Activated B cell treated with CpG ODN at 0.5 μM for 24 hours (primary cell): ENCODE measurements at regions of chr5 and their contacts with region 1.

Region 1: DNA sequence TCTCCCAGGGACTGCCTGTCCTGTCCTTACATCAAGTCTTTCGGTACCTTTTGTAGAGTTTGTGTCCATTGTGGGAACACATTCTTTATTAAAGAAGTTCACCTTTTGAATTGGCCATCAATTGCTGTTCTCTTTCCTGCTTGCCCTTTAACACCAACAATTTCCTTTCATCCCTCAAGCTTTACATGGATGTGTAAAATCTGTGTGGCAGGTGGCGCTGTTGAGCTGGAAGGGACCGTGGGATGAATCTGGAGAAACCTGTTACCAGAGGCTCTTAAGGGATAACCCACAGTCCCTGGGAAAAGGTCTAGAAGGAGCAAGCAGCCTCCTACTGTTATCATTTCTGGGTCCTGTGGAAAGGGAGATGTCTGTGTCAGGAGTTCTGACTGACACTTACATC is 7.9 kb upstream of the ZFP62 start:
- DNase-seq: peak; percentile 45
- ATAC-seq: peak; percentile 54
- H3K4me3 Mint-ChIP-seq: no peak overlapping the region
- H3K27ac Mint-ChIP-seq: no peak overlapping the region
- H3K4me1 Mint-ChIP-seq: peaks cover 13% of the 10 kb centered on the region
- H3K27me3 Mint-ChIP-seq: peaks cover 3% of the 10 kb centered on the region
- CTCF ChIP-seq: peak; percentile 20

Region 2: GRCh38 chr5:181088289-181088688 is 219.3 kb after region 1 on chr5:
- CTCF ChIA-PET with region 1: interaction called, 5 read pairs
- POLR2A ChIA-PET with region 1: no interaction called
- intact Hi-C with region 1: loop called (anchors 5 kb)
- DNase-seq: no peak
- ATAC-seq: no peak
- H3K4me3 Mint-ChIP-seq: no peak overlapping the region
- H3K27ac Mint-ChIP-seq: no peak overlapping the region
- H3K4me1 Mint-ChIP-seq: no peaks in the 10 kb centered on the region
- H3K27me3 Mint-ChIP-seq: peaks cover 10% of the 10 kb centered on the region
- CTCF ChIP-seq: no peak